Activated CD4-positive, alpha-beta memory T cell treated with anti-CD3 and anti-CD28 coated beads for 36 hours (primary cell): ENCODE measurements at regions of chr3 and their contacts with region 1.

Region 1: DNA sequence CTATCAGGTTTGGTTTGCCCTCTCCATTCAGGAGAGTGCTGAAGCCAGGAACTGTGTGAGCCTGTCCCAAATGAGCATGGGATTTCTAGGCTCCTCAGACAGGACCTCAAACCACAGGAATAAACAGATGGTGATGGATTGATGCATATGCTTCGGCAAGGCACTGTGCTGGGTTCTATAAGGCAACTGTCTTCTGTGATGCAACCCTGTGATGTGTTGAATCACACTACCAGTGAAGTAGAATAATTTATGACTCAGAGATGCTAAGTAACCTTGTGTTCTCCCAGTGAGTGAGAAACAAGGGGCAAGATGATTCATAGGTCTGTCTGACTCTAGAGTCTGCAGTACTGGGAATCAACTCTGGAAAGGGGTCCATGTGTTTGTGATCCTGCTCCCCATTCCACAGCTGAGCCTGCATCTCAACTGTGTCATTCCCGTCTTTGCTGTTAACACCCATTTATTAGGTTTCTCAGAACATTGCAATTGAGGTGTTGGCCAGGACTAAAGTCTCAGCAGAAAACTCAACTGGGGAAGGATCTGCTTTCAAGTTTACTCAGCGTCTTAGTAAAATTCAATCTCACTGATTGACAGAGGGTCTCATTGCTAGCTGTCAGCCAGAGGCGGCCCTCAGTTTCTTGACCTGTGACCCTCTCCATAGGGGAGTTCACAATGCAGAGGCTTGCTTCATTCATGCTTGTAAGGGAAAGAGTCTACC is 510.1 kb upstream of the CFAP20DC start:
- DNase-seq: peak; percentile 50
- H3K4me3 Mint-ChIP-seq: no peak overlapping the region
- H3K27ac Mint-ChIP-seq: peak overlapping the region; percentile 80
- H3K4me1 Mint-ChIP-seq: peaks cover 31% of the 10 kb centered on the region
- H3K27me3 Mint-ChIP-seq: peaks cover 5% of the 10 kb centered on the region

Region 2: GRCh38 chr3:59502806-59503205 is 57.1 kb before region 1 on chr3:
- CTCF ChIA-PET with region 1: no interaction called
- POLR2A ChIA-PET with region 1: no interaction called
- intact Hi-C with region 1: loop called (anchors 2 kb)
- DNase-seq: peak; percentile 58
- H3K4me3 Mint-ChIP-seq: no peak overlapping the region
- H3K27ac Mint-ChIP-seq: no peak overlapping the region
- H3K4me1 Mint-ChIP-seq: peaks cover 8% of the 10 kb centered on the region
- H3K27me3 Mint-ChIP-seq: no peaks in the 10 kb centered on the region

Region 3: DNA sequence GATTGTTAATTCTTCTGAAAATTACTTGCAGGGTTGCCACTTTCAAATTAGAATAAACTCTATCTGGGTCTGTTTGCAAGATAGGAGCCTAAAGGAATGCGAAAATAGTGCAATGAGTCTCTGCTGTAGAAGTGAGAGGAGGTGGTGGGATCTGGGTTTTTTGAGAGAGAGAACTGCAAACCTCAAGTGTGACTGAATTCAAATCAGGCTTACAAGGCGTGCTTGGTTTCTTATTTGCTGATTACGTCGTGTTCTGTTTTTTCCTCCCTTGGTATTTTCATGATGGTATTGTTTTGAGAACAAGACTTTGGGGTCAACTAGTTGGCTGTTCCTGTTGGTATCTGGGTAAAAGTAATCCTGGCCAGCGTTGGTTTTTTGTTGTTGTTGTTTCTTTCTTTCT is 19.2 kb before region 1 on chr3:
- CTCF ChIA-PET with region 1: interaction called, 3 read pairs
- POLR2A ChIA-PET with region 1: interaction called, 3 read pairs
- intact Hi-C with region 1: loop called (anchors 1 kb)
- DNase-seq: peak; percentile 11
- H3K4me3 Mint-ChIP-seq: no peak overlapping the region
- H3K27ac Mint-ChIP-seq: peak overlapping the region; percentile 42
- H3K4me1 Mint-ChIP-seq: peaks cover 26% of the 10 kb centered on the region
- H3K27me3 Mint-ChIP-seq: peaks cover 3% of the 10 kb centered on the region

Region 4: GRCh38 chr3:60010781-60011180 is 450.9 kb after region 1 on chr3:
- CTCF ChIA-PET with region 1: no interaction called
- POLR2A ChIA-PET with region 1: no interaction called
- intact Hi-C with region 1: loop called (anchors 10 kb)
- DNase-seq: peak; percentile 75
- H3K4me3 Mint-ChIP-seq: peak overlapping the region; percentile 60
- H3K27ac Mint-ChIP-seq: peak overlapping the region; percentile 85
- H3K4me1 Mint-ChIP-seq: peaks cover 77% of the 10 kb centered on the region
- H3K27me3 Mint-ChIP-seq: no peaks in the 10 kb centered on the region